A549 (cell line): ENCODE measurements at regions of chr22 and their contacts with region 1.

Region 1: DNA sequence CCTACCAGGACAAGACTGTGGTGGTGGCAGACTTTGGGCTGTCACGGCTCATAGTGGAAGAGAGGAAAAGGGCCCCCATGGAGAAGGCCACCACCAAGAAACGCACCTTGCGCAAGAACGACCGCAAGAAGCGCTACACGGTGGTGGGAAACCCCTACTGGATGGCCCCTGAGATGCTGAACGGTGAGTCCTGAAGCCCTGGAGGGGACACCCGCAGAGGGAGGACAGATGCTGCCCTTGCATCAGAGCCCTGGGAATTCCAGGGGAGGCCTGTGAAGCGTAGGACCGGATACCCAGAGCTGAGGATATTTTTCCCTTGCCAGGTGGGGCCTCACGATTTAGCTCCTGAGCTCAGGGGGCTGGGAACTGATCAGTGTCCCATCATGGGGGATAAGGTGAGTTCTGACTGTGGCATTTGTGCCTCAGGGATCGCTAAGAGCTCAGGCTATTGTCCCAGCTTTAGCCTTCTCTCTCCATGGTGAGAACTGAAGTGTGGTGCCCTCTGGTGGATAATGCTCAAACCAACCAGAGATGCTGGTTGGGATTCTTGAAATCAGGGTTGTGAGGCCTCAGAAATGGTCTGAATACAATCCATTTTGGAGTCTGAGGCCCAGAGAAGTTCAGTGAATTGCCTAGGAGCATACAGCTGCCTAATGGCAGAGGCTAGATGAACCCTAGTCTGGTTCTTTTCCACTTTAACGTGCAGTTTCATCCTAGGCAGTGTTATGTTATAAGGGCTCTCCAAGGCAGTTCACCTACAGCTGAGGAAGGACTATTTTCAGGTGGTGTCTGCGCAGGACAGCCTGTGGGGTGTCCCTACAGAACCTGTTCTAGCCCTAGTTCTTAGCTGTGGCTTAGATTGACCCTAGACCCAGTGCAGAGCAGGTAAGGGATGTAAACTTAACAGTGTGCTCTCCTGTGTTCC is 19.5 kb downstream of the PIK3IP1 start:
- DNase-seq: peak; percentile 39 to 59
- ATAC-seq: peak; percentile 87 to 93
- H3K4me3 ChIP-seq: no peak overlapping the region
- H3K27ac ChIP-seq: no peak overlapping the region
- H3K4me1 ChIP-seq: no peaks in the 10 kb centered on the region
- CTCF ChIP-seq: peak; percentile 61
- EP300 ChIP-seq: no peak
- POLR2A ChIP-seq: no peak
- RAD21 ChIP-seq: peak; percentile 66 to 68

Region 2: GRCh38 chr22:31206906-31207678 is 65.7 kb before region 1 on chr22:
- CTCF ChIA-PET with region 1: interaction called, 134 read pairs
- POLR2A ChIA-PET with region 1: interaction called, 4 read pairs
- DNase-seq: no peak
- ATAC-seq: no peak
- H3K4me3 ChIP-seq: no peak overlapping the region
- H3K27ac ChIP-seq: no peak overlapping the region
- H3K4me1 ChIP-seq: no peaks in the 10 kb centered on the region
- CTCF ChIP-seq: no peak
- EP300 ChIP-seq: no peak
- POLR2A ChIP-seq: no peak
- RAD21 ChIP-seq: no peak

Region 3: DNA sequence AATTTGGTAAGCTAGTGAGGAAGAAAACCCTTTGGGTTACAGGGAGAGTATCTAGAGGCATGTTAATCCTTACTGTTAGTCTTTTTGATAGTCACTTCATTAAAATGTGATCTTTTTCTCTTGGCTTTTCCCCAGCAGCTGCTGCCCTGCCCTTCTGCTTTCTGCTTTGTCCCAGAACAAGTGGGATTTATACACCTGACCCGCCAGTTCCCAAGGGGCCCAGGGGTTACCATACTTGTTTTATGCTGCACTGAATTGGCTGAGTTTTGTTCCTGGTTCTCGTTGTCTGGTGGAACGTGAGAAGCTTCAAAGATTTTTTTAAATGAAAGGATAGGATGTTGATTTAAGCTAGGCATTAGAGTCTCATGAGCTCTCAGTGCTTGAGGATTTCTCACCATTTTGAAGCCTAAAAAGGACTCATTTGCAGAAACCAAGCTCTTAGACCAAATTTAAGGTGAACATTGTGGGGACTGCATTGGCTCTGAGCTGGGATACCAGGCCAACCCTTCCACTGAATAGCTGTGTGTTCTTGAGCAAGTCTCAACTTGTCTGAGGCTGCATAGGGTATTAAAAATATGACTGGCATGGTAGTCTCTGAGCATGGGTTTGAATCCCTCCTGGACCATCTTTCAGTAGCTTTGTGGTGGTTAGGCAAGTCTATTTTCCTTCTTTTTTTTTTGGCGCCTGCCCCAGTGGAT is 54.1 kb before region 1 on chr22:
- CTCF ChIA-PET with region 1: interaction called, 134 read pairs
- POLR2A ChIA-PET with region 1: no interaction called
- DNase-seq: no peak
- ATAC-seq: no peak
- H3K4me3 ChIP-seq: no peak overlapping the region
- H3K27ac ChIP-seq: 0 out of 6 replicates have a peak overlapping the region, but pooled peaks of 1 of the 2 experiments have one; percentile 10
- H3K4me1 ChIP-seq: peaks cover 6% of the 10 kb centered on the region; the same call in 1 of the 3 replicates
- CTCF ChIP-seq: no peak
- EP300 ChIP-seq: no peak
- POLR2A ChIP-seq: no peak
- RAD21 ChIP-seq: no peak

Region 4: GRCh38 chr22:31241936-31242335 is 30.8 kb before region 1 on chr22:
- CTCF ChIA-PET with region 1: interaction called, 28 read pairs
- POLR2A ChIA-PET with region 1: no interaction called
- DNase-seq: no peak
- ATAC-seq: peak; percentile 41 to 42; a peak in 4 of 6 replicates
- H3K4me3 ChIP-seq: no peak overlapping the region
- H3K27ac ChIP-seq: peak overlapping the region; percentile 83 to 85; a peak in 5 of 6 replicates
- H3K4me1 ChIP-seq: peaks cover 50% of the 10 kb centered on the region
- CTCF ChIP-seq: no peak
- EP300 ChIP-seq: no peak
- POLR2A ChIP-seq: no peak
- RAD21 ChIP-seq: no peak

Region 5: DNA sequence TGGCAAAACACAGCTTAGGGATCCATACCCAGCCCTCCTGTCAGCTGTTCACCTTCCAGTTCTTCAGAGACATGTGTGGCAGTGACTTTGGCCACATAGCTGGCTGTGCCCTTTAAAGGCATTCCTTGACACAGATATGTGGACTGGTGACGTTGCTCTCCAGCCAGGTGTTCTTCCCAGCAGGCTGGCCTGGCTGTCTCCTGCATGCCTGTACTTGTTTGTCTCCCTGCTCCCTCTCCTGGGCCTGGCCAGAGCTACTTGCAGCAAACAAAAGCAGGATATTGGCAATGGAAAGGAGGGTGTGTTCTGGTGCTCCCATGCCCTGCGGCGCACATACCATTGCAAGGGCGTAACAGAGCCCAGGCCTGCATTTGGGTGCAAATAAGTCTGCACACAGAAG is 18.8 kb before region 1 on chr22:
- CTCF ChIA-PET with region 1: interaction called, 28 read pairs
- POLR2A ChIA-PET with region 1: no interaction called
- DNase-seq: no peak
- ATAC-seq: no peak
- H3K4me3 ChIP-seq: no peak overlapping the region
- H3K27ac ChIP-seq: no peak overlapping the region
- H3K4me1 ChIP-seq: peaks cover 4% of the 10 kb centered on the region; the same call in 1 of the 3 replicates
- CTCF ChIP-seq: no peak
- EP300 ChIP-seq: no peak
- POLR2A ChIP-seq: no peak
- RAD21 ChIP-seq: no peak

Region 6: DNA sequence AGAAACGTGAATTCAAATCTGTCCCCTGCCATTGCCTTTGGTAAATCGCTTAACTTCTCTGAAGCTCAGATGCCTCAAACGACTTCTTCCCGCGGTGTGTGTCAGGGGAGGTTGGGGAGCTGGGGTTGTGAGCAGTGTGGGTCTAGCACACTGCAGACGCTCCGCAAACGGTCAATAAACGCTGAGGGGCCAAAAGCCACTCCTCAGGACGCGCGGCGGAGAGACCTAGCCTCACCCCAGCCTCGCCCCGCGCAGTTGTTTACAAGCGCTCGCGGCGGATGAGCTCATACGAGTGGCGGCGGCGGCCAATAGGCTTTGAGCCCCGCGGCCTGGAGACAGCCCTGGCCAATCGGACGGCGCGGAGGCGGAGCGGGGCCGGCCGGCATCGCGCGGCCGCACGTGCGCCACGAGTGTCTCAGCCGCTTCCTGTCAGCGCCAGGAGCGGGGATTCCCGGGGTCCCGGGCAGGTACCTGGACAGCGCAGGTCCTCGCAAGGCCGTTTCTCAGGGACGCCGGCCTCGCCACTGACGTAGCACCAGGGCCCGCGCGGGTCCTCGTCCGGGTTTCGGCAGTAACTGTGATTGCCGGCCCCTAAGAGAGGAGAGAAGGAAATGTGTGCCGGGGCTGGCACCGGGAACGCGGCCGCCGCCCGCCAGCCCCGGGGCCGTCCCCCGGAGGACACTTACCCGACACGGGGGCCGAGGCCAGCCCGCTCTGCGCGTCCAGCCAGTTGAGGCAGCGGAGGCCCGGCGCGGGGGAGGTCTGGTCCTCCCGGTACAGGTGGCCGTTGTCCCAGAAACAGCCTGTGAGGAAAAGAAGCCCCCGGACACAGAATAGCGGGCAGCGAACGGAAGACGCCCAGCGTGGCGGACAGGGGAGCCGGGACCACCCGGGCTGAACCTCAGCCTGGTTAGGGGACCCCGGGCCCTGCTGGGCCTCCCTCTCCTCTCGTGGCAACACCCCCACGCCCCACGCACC is 18.0 kb after region 1 on chr22:
- CTCF ChIA-PET with region 1: interaction called, 27 read pairs
- POLR2A ChIA-PET with region 1: no interaction called
- DNase-seq: peak; percentile 78 to 89
- ATAC-seq: peak; percentile 95 to 97
- H3K4me3 ChIP-seq: peak overlapping the region; percentile 50
- H3K27ac ChIP-seq: peak overlapping the region; percentile 59 to 84; a peak in 5 of 6 replicates
- H3K4me1 ChIP-seq: peaks cover 20% of the 10 kb centered on the region
- CTCF ChIP-seq: no peak
- EP300 ChIP-seq: no peak
- POLR2A ChIP-seq: no peak
- RAD21 ChIP-seq: no peak

Region 7: DNA sequence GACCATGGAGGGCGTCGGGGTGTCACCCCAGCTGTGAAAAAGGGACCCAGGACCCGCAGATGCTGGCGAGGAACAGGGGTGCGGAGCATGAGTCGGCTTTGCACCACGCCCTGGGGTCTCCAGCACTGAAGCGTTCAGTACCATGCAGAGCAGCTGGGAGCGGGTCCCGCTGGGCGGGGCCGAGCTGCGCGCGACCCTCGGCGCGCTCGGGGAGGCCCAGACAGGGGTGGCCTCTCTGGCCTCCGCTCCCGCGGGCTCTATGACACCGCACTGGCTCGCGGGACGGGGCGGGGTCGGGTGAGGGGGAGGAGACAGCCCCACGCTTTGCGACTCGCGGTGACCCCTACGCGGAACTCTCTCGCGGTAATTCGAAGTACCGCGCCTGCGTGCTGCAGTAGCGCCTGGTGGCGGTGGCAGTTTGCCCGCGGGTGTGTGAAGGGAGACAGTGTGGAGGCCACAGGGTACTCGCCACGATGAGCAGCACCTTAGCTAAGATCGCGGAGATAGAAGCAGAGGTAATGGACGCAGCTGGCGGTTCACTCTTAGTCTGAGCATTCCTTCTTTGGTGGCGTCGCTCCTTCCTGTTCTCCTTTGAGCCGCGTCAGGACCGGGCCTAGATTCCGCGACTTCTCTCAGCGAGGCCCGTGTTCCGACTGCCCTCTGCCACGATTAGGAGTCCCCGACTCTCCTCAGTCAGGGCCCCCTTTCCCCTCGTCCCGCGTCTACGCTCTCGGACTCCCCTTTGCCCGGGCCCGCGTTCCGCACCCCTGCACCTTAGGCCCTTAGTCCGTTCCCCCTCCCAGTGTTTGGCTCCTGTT is 126.6 kb after region 1 on chr22 and contains the start of gene DRG1:
- CTCF ChIA-PET with region 1: no interaction called
- POLR2A ChIA-PET with region 1: no interaction called
- DNase-seq: peak; percentile 85 to 92
- ATAC-seq: peak; percentile 99
- H3K4me3 ChIP-seq: peak within 1 kb of the TSS; percentile 86
- H3K27ac ChIP-seq: peak within 1 kb of the TSS; percentile 93 to 96
- H3K4me1 ChIP-seq: no peaks in the 10 kb centered on the region
- CTCF ChIP-seq: no peak
- EP300 ChIP-seq: no peak
- POLR2A ChIP-seq: peak; percentile 76
- RAD21 ChIP-seq: no peak
- polyA plus RNA-seq, gene DRG1: 76.1 and 77.5 TPM in 2 replicates